HEK293 (cell line): ENCODE measurements at regions of chr17 and their contacts with region 1.

Region 1: DNA sequence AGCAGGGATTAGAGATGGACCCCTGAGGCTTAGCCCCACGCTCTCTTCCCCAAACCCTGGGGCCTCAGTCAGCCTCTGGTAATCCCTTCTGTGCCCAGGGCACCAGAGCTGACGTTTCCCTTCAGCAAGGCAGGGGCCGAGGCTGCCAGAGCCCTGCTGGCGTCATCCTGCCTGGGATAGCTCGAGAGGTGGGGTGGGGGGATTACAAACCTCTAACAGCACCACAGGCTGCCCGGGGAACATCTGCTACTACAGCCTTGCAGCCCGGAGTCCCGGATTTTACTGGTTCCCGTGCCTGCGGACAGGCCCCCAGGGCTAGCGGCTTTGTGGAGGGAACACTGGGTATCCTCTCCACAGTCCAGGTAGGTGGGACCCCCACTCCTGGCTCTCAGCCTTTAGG is at the start of gene AANAT:
- H3K4me3 ChIP-seq: no peak within 1 kb of the TSS
- H3K27ac ChIP-seq: no peak within 1 kb of the TSS
- H3K4me1 ChIP-seq: no peaks in the 10 kb centered on the region
- CTCF ChIP-seq: no peak

Region 2: GRCh38 chr17:76478730-76479514 is 11.6 kb after region 1 on chr17:
- CTCF ChIA-PET with region 1: interaction called, 24 read pairs
- POLR2A ChIA-PET with region 1: no interaction called
- H3K4me3 ChIP-seq: no peak overlapping the region
- H3K27ac ChIP-seq: no peak overlapping the region
- H3K4me1 ChIP-seq: no peaks in the 10 kb centered on the region
- CTCF ChIP-seq: no peak

Region 3: DNA sequence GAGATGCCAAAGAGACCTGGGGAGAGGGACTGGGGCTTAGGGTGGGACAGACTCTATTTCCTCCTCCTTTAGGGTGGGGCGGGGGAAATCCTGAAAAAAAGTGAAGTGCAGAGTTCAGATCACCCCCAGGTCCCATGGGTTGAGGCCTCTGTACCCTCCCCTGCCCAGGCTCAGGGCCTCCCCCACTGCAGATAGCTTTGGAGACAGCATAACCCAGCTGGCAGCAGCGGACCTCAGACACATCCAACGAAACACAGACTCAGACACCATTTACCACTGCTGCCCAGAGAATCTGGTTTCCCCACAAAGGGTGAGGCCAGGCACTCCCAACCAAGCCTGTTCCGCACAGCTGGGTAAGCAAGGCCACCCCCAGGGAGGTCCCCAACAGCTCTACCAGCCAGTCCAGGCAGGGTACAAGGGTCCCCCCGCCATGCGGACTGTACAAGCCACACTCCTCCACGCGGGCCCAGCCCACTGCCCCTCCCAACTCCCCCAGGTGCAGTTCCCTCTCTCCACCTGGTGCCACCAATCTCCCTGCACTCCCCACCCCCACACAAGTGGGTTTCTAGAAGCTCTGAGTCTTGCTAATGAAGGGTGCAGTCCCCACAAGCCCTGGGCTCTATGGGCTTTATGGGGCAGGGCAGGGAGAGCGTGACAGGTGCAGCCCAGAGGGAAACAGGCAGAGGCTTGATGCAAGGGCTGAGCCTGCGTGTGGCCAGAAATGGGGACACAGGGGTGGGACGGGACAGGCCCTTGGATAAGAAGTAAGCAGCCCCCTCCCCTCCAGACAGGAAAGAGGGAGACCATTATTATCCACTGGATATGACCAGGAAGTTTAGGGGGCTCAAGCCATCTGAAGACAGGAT is 25.0 kb after region 1 on chr17:
- CTCF ChIA-PET with region 1: interaction called, 15 read pairs
- POLR2A ChIA-PET with region 1: interaction called, 3 read pairs
- H3K4me3 ChIP-seq: no peak overlapping the region
- H3K27ac ChIP-seq: no peak overlapping the region
- H3K4me1 ChIP-seq: peaks cover 4% of the 10 kb centered on the region; the same call in 1 of the 2 replicates
- CTCF ChIP-seq: no peak

Region 4: DNA sequence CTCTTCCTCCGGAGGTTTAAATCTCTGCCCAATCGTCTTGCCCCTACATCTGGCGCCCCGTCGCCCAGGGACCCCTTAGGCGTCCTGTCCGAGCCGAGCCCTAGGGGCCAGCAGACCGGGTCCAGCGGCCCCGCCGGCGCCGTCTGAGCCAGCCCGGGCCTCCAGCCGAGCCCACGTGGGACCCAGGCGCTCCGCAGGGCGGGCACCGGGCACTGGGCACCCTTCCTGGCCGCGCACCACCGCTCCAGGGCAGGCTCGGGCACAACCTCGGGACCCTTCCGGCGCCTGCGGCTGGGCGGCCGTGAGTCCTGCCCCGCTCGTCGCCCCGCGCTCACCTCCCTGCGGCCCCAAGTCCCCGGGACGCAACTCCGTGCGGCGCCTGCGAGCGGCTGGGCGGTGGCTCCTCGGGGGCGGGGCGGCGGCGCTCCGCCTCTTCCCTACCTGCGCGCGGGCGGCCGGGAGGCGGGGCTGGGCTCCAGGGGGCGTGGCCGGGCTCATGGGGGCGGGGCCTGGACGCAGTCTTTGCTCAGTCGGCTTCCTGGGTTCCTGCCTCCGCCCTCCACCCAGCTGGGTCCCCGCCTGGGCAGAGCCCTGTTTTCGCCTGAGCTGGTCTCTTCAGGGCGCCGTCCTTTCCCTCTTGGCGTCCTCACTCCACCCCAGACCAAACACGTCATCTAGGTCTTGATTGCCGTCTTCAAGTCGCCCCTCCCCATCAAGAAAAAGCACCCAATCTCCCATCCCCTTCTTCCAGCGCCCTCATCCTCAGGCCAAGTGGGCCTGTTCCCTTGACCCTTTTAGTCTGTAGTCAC is 33.9 kb after region 1 on chr17 and contains the start of gene RHBDF2:
- CTCF ChIA-PET with region 1: interaction called, 187 read pairs
- POLR2A ChIA-PET with region 1: interaction called, 5 read pairs
- H3K4me3 ChIP-seq: peak within 1 kb of the TSS; percentile 66
- H3K27ac ChIP-seq: peak within 1 kb of the TSS; percentile 39; the same call in 1 of the 2 replicates
- H3K4me1 ChIP-seq: peaks cover 16% of the 10 kb centered on the region
- CTCF ChIP-seq: no peak